Ovary (tissue), 10 donors: ENCODE measurements at regions of chr1 and their contacts with region 1.

Region 1: GRCh38 chr1:41842993-41843755 is 75.5 kb downstream of the HIVEP3 start:
- DNase-seq: no peak
- H3K4me3 ChIP-seq: no peak overlapping the region
- H3K27ac ChIP-seq: no peak overlapping the region
- H3K4me1 ChIP-seq: no peaks in the 10 kb centered on the region
- H3K27me3 ChIP-seq: no peaks in the 10 kb centered on the region
- CTCF ChIP-seq: no peak
- EP300 ChIP-seq: no peak
- POLR2A ChIP-seq: no peak

Region 2: GRCh38 chr1:41802532-41803501 is 40.4 kb before region 1 on chr1:
- intact Hi-C with region 1: no loop called
- DNase-seq: peak in 2 of 5 donors; percentile 22 to 37
- H3K4me3 ChIP-seq: no peak overlapping the region
- H3K27ac ChIP-seq: no peak overlapping the region
- H3K4me1 ChIP-seq: no peaks in the 10 kb centered on the region
- H3K27me3 ChIP-seq: no peaks in the 10 kb centered on the region
- CTCF ChIP-seq: no peak
- EP300 ChIP-seq: no peak
- POLR2A ChIP-seq: no peak

Region 3: DNA sequence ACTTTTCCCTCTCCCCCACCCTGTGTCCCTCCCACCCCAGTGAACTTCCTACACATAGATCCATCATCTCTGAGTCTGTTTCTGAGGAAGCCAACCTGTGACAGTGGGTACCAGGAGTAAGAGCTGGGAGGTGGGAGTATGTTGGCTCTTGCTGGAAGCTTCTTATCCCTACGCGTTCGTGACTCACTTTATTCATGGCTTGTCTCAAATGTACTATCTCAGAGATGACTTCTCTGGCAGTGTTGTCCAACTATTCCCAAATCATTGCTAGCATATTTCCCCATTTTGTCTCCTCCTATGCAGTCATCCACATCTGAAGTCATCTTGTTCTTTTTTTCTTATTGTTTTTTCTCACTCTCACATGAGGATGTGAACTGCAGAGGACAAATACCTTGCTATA is 12.4 kb before region 1 on chr1:
- intact Hi-C with region 1: loop called in 1 of 4 experiments (anchors 1 kb)
- DNase-seq: no peak
- H3K4me3 ChIP-seq: no peak overlapping the region
- H3K27ac ChIP-seq: no peak overlapping the region
- H3K4me1 ChIP-seq: no peaks in the 10 kb centered on the region
- H3K27me3 ChIP-seq: no peaks in the 10 kb centered on the region
- CTCF ChIP-seq: no peak
- EP300 ChIP-seq: no peak
- POLR2A ChIP-seq: no peak

Region 4: DNA sequence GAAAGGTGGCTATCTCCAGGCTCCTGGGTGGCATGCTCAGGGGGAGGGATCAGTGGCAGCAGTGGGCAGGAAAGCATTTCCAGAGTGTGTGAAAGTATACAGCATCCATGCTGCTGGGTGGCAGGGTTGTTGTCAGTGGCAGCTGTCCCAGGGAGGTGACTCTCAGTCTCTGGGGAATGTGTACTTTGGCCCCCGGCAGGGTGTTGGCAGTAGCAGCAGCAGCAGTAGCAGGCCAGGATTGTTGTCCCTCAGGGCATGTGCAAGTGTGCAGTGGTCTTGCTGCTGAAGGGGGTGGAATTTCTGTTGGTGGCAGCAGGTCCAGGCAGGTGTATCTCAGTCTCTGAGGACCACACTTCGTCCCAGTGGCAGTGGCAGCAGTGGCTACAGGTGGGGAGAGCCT is 238.3 kb after region 1 on chr1:
- intact Hi-C with region 1: no loop called
- DNase-seq: no peak
- H3K4me3 ChIP-seq: no peak overlapping the region
- H3K27ac ChIP-seq: no peak overlapping the region
- H3K4me1 ChIP-seq: no peaks in the 10 kb centered on the region
- H3K27me3 ChIP-seq: no peaks in the 10 kb centered on the region
- CTCF ChIP-seq: no peak
- EP300 ChIP-seq: no peak
- POLR2A ChIP-seq: no peak